Heart left ventricle (tissue), 16 donors: ENCODE measurements at regions of chr17 and their contacts with region 1.

Region 1: DNA sequence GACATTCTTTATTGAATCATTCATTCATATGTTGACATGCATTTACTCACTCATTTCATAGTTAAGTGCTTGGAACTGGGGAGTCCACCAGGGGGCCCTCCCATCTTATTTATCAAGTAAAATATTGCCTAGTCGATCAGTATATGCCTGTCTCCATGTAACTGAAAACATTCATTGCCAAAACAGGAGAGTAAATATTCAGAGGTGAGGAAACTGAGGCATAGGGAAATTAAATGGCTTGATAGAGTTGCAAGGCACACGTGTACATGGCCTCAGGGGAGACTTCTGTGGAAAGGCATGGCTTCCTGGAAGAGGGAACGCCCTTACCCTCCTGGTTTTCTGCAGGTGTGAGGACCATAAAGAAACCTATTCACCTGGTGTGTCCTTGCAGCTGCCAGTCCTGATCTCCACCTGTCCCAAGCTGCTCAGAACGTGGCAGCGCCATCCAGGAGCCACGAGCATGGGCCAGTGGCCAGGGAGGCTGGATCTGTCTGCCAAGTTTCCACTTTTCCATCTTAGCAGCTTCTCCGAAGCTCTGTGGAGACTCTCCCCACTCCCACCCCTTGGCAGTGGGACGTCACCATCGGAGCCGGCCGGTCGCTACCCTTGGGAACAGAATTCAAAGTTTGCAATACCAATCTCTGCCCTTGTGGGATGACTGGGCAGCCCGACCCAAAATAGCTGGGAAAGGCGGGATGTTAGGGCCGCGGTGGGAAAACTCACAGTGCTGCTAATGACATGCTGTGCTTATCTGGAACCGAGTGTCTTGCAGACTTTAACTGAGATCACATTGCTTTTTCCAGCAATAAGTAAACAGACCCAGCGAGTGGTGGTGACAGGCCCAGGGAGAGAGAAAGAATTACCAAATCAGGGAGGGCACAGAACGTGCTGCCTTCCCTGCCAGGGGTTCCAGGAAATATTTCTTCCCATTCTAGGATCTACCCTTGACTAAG is 4.1 kb upstream of the C1QTNF1 start:
- DNase-seq: peak; percentile 58 to 86 (median 74)
- ATAC-seq: peak; percentile 29 to 44 (median 36)
- H3K4me3 ChIP-seq: peak overlapping the region in 2 of 12 donors; percentile 1 to 10
- H3K27ac ChIP-seq: peak overlapping the region; percentile 21 to 98 (median 80)
- H3K4me1 ChIP-seq: peaks cover 0 to 54% (median 46%) of the 10 kb centered on the region in 12 donors
- H3K27me3 ChIP-seq: peaks cover 0 to 28% (median 0%) of the 10 kb centered on the region in 9 donors
- CTCF ChIP-seq: peak; percentile 57 to 82 (median 75)
- POLR2A ChIP-seq: no peak

Region 2: GRCh38 chr17:79038545-79039135 is 18.7 kb after region 1 on chr17:
- intact Hi-C with region 1: loop called in 8 of 10 experiments (anchors 1 to 2 kb)
- DNase-seq: no peak
- ATAC-seq: peak in 3 of 4 donors; percentile 31 to 56 (median 37)
- H3K4me3 ChIP-seq: no peak overlapping the region
- H3K27ac ChIP-seq: peak overlapping the region in 3 of 12 donors; percentile 20 to 60 (median 52)
- H3K4me1 ChIP-seq: peaks cover 0 to 43% (median 21%) of the 10 kb centered on the region in 12 donors
- H3K27me3 ChIP-seq: no peaks in the 10 kb centered on the region
- CTCF ChIP-seq: no peak
- POLR2A ChIP-seq: no peak

Region 3: GRCh38 chr17:79045842-79046196 is 25.9 kb after region 1 on chr17:
- intact Hi-C with region 1: loop called in 7 of 10 experiments (anchors 1 to 2 kb)
- DNase-seq: peak; percentile 77 to 89 (median 77)
- ATAC-seq: peak; percentile 60 to 77 (median 68)
- H3K4me3 ChIP-seq: peak overlapping the region in 3 of 12 donors; percentile 11 to 39 (median 27)
- H3K27ac ChIP-seq: peak overlapping the region in 11 of 12 donors; percentile 45 to 76 (median 65)
- H3K4me1 ChIP-seq: peaks cover 6 to 47% (median 24%) of the 10 kb centered on the region in 12 donors
- H3K27me3 ChIP-seq: no peaks in the 10 kb centered on the region
- CTCF ChIP-seq: peak; percentile 92 to 98 (median 95)
- POLR2A ChIP-seq: no peak

Region 4: GRCh38 chr17:79074650-79075445 is 54.9 kb after region 1 on chr17 and contains the start of gene ENGASE:
- intact Hi-C with region 1: loop called in 4 of 10 experiments (anchors 2 to 10 kb)
- DNase-seq: peak; percentile 96 to 98 (median 96)
- ATAC-seq: peak; percentile 88 to 99 (median 98)
- H3K4me3 ChIP-seq: peak within 1 kb of the TSS; percentile 48 to 99 (median 86)
- H3K27ac ChIP-seq: peak within 1 kb of the TSS; percentile 67 to 96 (median 90)
- H3K4me1 ChIP-seq: peaks cover 0 to 25% (median 14%) of the 10 kb centered on the region in 12 donors
- H3K27me3 ChIP-seq: no peaks in the 10 kb centered on the region
- CTCF ChIP-seq: no peak
- POLR2A ChIP-seq: peak in 1 of 2 donors; percentile 75
- total RNA-seq, gene ENGASE: 6.2 to 42.0 (median 25.5) TPM

Region 5: DNA sequence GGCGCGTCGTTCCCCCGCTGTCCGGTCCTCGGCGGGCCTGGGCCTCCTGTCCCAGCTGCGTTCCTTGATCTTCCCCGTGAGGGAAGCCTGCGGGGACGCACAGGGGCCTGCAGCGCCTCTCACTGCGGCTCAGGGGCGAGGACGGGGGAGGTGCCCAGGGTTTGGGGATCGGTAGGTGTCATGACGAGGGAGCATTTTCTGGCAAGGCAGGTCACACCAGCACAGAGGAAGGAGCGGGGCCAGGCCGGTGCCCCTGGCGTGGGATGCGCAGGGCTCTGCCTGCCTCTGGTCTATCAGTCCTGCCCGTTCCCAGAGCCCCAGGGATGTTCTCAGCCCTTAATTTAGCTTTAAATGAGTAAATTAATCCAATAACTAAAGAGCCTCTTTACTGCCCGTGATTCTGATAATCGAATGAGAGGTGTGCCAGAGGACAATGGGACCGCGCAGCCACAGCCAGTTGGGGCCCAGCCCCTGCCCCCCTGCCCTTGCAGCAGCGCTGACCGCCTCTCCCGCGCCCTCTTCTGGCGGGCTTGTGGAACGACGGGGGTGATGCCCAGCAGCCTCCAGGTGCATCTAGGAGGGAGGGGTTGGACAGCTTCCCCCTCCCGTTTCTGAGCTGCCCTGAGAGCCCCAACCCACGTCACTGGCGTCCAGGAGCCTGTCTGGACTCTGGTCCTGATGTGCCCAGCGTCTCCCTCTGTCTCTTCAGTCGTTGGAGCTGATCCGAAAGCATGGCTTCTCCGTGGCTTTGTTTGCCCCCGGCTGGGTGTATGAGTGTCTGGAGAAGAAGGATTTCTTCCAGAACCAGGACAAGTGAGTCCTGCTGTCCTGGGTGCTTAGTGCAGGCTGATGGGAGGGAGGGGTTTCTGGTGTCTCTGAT is 62.6 kb after region 1 on chr17:
- intact Hi-C with region 1: loop called in 6 of 10 experiments (anchors 2 to 10 kb)
- DNase-seq: peak in 4 of 5 donors; percentile 42 to 75 (median 58)
- ATAC-seq: peak in 3 of 4 donors; percentile 36 to 60 (median 58)
- H3K4me3 ChIP-seq: no peak overlapping the region
- H3K27ac ChIP-seq: peak overlapping the region in 1 of 12 donors; percentile 22
- H3K4me1 ChIP-seq: peaks cover 0 to 17% (median 8%) of the 10 kb centered on the region in 12 donors
- H3K27me3 ChIP-seq: no peaks in the 10 kb centered on the region
- CTCF ChIP-seq: peak; percentile 75 to 86 (median 79)
- POLR2A ChIP-seq: no peak

Region 6: DNA sequence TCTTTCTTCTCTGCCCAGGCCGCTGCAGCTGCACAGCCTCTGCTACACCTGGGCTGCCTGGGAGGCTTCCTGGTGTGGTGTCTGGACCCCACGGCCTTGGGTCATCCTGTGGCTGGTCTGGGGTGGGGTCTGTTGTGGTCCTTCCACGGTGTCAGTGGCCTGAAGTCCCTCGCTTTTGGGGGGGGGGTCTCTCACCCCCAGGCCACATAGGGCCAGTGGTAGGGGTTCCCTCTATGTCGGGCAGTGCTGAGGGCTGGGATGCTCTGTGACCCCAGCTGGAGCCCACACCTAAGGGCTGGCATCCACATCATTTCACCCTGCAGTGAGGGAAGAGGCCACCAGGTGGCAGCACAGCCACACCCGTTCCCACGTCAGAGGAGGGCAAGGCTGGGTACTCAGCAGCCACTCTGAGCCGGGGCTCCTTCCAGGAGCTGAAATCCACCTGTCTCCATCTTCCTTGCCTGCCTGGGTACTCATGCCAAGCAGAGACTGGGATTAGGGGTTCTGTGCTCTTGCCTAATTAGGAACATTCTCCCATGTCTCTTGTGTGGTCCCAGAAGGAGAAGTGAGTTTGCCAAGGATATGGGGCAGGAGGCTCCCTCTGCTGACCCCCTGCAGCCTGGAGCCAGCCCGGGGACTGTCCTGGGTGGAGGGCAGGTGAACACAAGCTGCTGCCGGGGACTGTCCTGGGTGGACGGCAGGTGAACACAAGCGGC is 67.7 kb after region 1 on chr17:
- intact Hi-C with region 1: loop called in 5 of 10 experiments (anchors 2 to 10 kb)
- DNase-seq: peak; percentile 56 to 83 (median 64)
- ATAC-seq: peak; percentile 49 to 73 (median 64)
- H3K4me3 ChIP-seq: no peak overlapping the region
- H3K27ac ChIP-seq: no peak overlapping the region
- H3K4me1 ChIP-seq: peaks cover 0 to 18% (median 5%) of the 10 kb centered on the region in 12 donors
- H3K27me3 ChIP-seq: peaks cover 0 to 18% (median 0%) of the 10 kb centered on the region in 9 donors
- CTCF ChIP-seq: peak; percentile 77 to 97 (median 92)
- POLR2A ChIP-seq: no peak